MCF 10A (cell line): ENCODE measurements at regions of chr15 and their contacts with region 1.

Region 1: DNA sequence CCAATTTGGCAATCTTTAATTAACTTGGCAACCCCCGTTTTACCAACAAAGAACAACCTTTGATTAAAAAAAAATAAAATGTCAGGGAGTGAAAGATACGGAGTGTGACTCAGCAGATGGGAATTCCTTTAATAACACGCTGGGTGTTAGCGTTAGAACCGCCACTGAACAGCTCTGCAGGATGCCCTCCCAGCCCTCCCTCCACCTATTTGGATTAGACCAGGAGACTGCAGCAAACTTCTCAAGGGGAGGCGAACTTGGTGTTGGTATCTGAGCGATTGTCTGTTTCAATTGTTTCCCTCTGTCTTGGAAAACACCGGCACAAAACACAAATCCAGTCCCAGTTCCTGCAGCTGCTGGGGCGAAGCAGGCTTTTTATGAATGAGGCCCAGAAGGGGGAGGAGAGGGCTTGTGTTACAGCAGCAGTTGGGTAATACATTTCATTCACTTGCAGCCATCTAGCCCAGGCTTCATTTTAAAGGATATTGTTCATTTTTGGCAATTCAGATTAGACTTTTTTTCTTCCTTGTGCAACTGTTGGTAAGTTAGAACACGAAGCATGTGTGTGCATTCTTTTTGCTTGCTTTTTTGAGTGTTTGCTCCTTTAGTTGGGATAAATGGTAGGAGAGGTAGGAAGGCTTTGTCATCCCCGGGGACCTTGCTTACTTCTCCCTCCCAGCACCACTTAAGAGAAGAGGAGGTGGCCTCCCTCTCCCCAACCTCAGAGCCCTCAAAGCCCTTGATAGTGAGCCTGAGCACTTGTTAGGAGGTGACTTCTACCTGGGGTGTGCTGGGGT is 152.3 kb downstream of the IGF1R start:
- DNase-seq: peak; percentile 60
- H3K4me3 Mint-ChIP-seq: peak overlapping the region; percentile 52
- H3K27ac Mint-ChIP-seq: peak overlapping the region; percentile 2
- H3K4me1 Mint-ChIP-seq: peaks cover 25% of the 10 kb centered on the region
- H3K27me3 Mint-ChIP-seq: no peaks in the 10 kb centered on the region
- CTCF ChIP-seq: no peak

Region 2: DNA sequence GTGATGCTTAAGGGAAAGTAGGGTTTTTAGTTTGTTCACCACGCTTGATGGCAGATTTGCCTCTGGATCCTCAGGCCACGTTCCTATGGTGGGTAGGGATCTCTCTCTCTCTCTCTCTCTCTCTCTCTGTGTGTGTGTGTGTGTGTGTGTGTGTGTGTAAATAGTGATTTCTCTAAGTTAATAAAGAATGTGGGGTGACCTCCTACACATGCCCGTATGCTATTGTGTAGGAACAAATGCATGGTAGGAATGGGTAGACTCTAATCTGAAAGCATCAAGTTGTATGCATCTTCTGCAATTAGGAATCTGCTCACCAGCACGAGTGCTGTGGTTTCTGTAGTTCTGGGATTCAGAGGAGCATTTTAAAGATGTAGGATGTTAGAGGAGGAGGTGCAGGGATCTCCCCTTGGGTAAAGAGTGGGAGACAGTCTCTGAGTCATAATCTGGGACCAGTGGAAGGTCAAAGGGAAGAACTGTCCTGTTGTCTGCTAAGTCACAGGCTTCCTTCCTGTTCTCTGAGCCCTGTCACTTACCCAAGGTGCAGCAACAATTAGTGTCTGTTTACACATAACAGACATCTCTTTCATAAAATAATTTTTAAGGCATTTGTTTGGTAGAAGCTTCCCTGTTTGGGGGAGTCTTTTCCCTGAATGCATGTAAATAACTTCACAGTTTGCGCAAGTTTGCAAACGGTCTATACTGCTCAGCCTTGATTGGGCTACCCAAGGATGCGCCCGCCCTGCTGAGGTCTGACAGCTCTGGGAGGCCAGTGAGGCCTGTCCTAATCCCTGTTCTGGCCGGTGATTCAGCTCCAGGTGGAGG is 12.5 kb before region 1 on chr15:
- CTCF ChIA-PET with region 1: interaction called, 3 read pairs
- POLR2A ChIA-PET with region 1: interaction called, 13 read pairs
- intact Hi-C with region 1: no loop called
- DNase-seq: peak; percentile 11
- H3K4me3 Mint-ChIP-seq: no peak overlapping the region
- H3K27ac Mint-ChIP-seq: no peak overlapping the region
- H3K4me1 Mint-ChIP-seq: peaks cover 13% of the 10 kb centered on the region
- H3K27me3 Mint-ChIP-seq: no peaks in the 10 kb centered on the region
- CTCF ChIP-seq: no peak

Region 3: GRCh38 chr15:99253381-99254090 is 452.9 kb after region 1 on chr15:
- CTCF ChIA-PET with region 1: no interaction called
- POLR2A ChIA-PET with region 1: no interaction called
- intact Hi-C with region 1: no loop called
- DNase-seq: no peak
- H3K4me3 Mint-ChIP-seq: no peak overlapping the region
- H3K27ac Mint-ChIP-seq: no peak overlapping the region
- H3K4me1 Mint-ChIP-seq: peaks cover 15% of the 10 kb centered on the region
- H3K27me3 Mint-ChIP-seq: no peaks in the 10 kb centered on the region
- CTCF ChIP-seq: no peak